Upper lobe of right lung (tissue), 1 donor: ENCODE measurements at regions of chr6 and their contacts with region 1.

Region 1: DNA sequence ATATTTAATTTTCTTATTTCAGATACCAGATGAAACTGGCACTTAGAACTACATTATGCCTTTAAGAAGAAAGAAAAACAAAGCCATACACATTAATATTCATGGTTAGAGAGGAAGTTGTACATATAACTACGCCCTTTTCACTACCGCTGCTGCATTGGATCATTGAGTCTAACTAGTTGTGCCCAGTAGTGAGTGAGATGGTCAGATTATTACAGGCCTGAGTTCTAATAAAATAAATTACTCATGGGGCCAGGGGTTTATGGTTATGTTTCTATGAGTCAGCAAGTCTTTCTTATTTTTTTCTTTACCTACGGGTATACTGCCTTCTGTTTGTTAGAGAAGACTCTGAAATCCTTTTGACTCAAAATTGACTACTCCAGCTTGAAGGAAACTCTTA is 11.5 kb downstream of the RIOK1 start:
- DNase-seq: no peak
- ATAC-seq: peak; percentile 50
- H3K4me3 ChIP-seq: no peak overlapping the region
- H3K27ac ChIP-seq: no peak overlapping the region
- H3K4me1 ChIP-seq: no peaks in the 10 kb centered on the region
- H3K27me3 ChIP-seq: no peaks in the 10 kb centered on the region
- CTCF ChIP-seq: no peak

Region 2: DNA sequence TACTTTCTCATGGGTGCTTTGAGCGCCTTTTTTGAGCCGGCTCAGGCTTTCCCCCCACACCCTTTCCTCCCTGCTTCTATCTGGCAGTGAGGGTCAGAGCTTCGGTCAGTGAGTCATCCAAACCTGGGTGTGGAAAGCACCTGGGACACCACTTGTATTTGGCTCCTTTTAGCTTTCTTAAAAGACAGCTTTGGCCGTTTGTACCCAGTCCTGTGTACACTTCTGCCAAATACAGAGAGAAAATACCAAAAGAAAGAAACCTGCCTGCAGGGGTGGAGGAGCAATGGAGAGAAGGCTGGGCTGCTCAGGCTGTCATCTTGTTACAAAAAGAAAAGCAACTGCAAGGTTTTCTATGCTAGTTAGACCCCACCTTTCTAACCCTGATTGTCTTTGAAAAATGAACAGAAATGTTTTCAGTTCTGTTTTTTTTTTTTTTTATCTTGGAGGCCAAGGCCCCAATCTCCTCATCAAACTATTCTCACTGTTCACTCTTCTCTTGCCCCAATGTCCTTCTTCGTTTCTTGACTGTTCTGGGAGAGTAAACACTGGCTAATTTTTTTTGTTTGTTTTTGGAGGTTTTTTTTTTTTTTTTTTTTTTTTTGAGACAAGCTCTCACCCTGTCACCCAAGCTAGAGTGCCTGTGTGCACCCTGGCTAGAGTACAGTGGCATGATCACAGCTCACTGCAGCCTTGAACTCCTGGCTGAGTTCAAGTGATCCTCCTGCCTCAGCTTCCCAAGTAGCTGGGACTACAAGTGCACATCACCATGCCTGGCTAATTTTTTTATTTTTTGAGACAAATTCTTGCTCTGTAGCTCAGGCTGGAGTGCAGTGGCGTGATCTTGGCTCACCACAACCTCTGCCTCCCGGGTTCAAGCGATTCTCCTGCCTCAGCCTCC is 164.5 kb before region 1 on chr6:
- intact Hi-C with region 1: no loop called
- DNase-seq: no peak
- ATAC-seq: peak; percentile 55
- H3K4me3 ChIP-seq: no peak overlapping the region
- H3K27ac ChIP-seq: peak overlapping the region; percentile 51
- H3K4me1 ChIP-seq: peaks cover 22% of the 10 kb centered on the region
- H3K27me3 ChIP-seq: no peaks in the 10 kb centered on the region
- CTCF ChIP-seq: no peak

Region 3: DNA sequence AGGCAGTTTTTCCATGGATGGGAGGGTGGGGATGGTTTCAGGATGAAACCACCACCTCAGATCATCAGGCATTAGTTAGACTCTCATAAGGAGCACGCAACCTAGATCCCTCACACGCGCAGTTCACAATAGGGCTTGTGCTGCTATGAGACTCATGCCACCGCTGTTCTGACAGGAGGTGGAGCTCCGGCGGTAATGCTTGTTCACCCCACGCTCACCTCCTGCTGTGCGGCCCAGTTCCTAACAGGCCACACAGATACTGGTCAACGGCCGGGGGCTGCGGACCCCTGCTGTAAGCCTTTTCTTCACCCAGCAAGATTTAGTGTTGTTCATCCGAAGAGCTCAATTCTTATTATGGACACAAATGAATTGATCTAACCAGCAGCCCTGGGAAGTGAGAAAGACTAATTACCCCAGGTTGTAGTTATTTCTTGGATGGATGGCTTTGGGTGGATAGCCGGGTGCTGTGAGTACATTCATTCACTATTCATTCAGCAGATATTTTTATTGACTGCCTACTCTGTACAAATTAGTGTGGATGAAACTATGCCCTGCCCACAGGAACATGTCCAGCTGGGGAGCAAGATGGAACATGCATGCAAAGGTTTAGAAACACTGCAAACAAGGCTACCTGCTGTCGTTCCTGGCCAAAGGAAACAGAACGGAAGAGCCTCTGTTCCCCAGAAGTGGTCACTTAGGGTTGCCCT is 45.7 kb after region 1 on chr6:
- intact Hi-C with region 1: no loop called
- DNase-seq: no peak
- ATAC-seq: no peak
- H3K4me3 ChIP-seq: no peak overlapping the region
- H3K27ac ChIP-seq: no peak overlapping the region
- H3K4me1 ChIP-seq: no peaks in the 10 kb centered on the region
- H3K27me3 ChIP-seq: no peaks in the 10 kb centered on the region
- CTCF ChIP-seq: no peak

Region 4: DNA sequence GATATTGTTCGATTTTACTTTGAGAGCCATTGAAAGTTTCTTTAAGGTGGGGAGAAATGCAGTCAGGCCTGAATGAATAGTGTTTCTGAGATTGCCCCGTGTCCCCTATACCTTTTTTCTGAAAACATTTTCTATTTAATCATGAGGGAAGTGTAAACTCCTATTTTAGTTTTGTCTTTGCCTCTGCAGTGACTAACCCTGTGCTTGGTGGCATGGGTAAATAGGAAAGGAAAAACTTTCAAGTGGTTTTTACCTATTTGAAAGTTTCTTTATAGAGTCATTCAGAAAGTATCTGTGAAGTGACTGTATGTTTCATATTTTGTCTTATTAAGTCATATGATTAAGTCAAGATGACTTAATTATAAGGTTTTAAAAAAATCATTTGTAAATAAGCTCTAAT is 203.4 kb after region 1 on chr6:
- intact Hi-C with region 1: loop called (anchors 10 kb)
- DNase-seq: no peak
- ATAC-seq: no peak
- H3K4me3 ChIP-seq: no peak overlapping the region
- H3K27ac ChIP-seq: no peak overlapping the region
- H3K4me1 ChIP-seq: no peaks in the 10 kb centered on the region
- H3K27me3 ChIP-seq: no peaks in the 10 kb centered on the region
- CTCF ChIP-seq: no peak